ENCODE measurements at regions of chr4 and their contacts with region 1.

Region 1: DNA sequence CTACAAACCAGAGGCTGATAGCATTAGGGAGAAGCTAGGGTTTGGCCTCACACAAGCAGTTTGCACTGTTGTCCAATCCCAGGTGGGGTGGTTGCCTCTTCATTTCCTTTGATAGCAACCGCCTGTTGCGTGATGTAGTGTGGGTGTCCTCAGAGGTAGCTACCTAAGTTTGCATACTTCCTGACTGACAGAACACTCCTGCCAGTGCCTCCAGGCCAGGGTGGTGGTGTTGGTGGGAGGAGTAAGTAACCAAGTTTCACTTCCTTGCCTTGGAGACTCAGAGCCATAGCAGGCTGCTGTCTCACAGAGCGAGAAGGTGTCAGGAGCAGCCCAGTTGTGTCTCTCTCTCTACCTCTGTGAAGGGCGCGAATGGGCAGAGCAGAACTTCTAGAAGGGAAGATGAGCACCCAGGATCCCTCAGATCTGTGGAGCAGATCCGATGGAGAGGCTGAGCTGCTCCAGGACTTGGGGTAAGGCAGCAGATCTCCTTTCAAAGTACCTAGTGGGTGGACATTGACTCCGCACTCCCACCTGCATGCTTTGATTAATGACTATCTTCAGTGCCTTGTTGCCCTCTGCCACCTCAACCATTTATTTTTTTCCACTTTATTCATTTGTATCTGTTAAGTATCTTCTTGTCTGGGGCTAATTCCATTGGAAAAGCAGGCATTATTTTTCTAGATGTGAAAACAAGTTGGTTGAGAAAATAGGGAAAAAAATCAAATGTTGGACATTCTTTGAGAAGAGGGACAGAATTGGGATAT is at the start of gene DAPP1:
- DNase-seq: peak; percentile 89
- ATAC-seq: peak; percentile 58
- H3K4me3 ChIP-seq: peak within 1 kb of the TSS; percentile 69
- H3K27ac ChIP-seq: peak within 1 kb of the TSS; percentile 99
- H3K4me1 ChIP-seq: peaks cover 40% of the 10 kb centered on the region
- H3K27me3 ChIP-seq: no peaks in the 10 kb centered on the region
- CTCF ChIP-seq: no peak
- total RNA-seq, gene DAPP1: 11.6 and 11.8 TPM in 2 replicates

Region 2: DNA sequence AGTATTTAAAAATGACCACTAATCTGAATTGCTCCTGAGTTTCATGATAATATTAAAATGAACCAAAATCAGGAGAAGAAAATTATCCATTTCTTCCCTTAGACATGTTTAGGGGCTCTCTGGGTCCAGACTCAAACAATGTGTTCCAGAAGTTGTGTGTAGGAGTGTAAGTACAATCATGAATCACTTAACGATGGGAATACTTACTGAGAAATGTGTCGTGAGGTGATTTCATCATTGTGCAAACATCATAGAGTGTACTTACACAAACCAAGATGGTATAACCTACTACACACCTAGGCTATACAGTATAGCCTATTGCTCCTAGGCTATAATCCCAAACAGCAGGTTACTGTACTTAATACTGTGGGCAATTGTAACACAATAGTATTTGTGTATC is 1748.2 kb before region 1 on chr4:
- CTCF ChIA-PET with region 1: no interaction called
- POLR2A ChIA-PET with region 1: no interaction called
- intact Hi-C with region 1: no loop called
- DNase-seq: peak; percentile 54
- ATAC-seq: peak; percentile 64; the same call in 1 of the 2 replicates
- H3K4me3 ChIP-seq: no peak overlapping the region
- H3K27ac ChIP-seq: no peak overlapping the region
- H3K4me1 ChIP-seq: peaks cover 3% of the 10 kb centered on the region; the same call in 1 of the 2 replicates
- H3K27me3 ChIP-seq: no peaks in the 10 kb centered on the region
- CTCF ChIP-seq: no peak

Region 3: DNA sequence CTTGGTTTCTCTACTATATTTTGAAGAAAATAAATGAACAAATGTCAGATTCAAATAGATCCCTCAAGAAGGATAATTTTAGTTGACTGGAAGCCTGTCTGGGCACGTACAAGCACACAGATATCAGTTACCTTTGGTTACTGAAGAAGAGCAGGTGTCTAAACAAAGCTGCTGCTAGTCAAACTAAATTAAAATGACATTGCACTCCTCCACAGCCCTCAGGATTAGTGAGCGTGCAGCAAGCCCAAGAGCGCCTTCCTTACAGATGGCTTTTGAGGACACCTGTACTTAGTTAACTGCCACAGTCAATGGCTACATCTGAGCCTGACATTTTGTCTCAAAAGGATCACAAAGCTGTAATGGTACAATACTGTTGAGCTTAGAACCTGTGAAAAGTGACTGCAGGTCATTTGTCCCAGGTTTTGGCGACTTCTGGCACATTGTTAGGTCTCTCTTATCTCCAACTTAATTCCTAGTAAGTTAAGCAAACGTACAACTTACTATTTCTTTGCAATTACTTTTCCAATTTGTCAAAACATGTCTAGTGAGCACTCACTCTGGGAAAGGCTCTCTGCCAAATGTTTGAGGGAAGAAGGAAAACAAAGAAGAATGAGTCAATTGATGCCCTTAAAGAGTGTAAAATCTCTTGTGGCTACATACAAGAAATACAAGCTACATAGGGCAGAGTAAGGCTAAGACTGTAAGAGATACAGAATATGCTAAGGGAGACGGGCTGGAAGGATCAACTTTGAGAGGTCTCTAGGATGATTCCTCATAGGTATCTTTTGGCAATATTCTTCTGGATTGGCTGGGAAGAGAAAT is 25.7 kb before region 1 on chr4:
- CTCF ChIA-PET with region 1: no interaction called
- POLR2A ChIA-PET with region 1: no interaction called
- intact Hi-C with region 1: no loop called
- DNase-seq: peak; percentile 49
- ATAC-seq: 0 out of 2 replicates have a peak, but pooled peaks have one; percentile 29
- H3K4me3 ChIP-seq: no peak overlapping the region
- H3K27ac ChIP-seq: no peak overlapping the region
- H3K4me1 ChIP-seq: no peaks in the 10 kb centered on the region
- H3K27me3 ChIP-seq: no peaks in the 10 kb centered on the region
- CTCF ChIP-seq: no peak

Region 4: DNA sequence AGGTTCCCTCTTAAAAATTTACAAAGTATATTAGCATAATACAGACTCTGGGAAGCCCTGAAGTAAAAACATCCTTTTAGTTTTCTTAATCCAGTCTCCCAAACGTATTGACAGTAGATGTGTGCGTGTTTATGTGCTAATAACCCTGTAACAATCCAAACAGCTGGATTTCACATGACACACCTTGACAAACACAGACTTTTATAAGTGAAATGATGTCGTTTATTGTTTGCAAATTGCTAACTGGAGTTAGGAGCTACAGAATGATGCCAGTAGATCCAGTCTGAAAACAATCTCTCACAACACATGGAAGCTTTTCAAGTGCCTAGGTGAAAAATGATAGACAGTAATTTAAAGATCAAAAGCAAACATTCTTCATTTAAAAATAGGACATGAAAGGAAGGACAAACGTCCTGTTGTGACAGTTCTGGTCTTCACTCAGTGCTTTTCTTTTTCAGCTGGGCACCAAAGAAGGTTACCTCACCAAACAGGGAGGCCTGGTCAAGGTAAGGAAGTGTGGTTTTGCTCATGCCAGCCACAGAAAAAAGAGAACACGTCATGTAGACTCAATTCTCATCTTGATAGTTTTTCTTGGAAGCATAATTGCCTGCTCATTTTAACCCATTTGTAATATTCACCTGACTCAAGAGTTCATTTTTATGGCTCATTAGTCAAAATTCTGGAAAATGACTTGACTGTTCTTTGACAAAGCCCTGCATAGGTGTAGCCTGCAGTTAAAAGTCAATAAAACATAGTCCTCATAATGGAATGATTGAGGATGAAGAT is 44.6 kb after region 1 on chr4:
- CTCF ChIA-PET with region 1: no interaction called
- POLR2A ChIA-PET with region 1: no interaction called
- intact Hi-C with region 1: loop called (anchors 5 kb)
- DNase-seq: no peak
- ATAC-seq: no peak
- H3K4me3 ChIP-seq: no peak overlapping the region
- H3K27ac ChIP-seq: no peak overlapping the region
- H3K4me1 ChIP-seq: peaks cover 11% of the 10 kb centered on the region; the same call in 1 of the 2 replicates
- H3K27me3 ChIP-seq: no peaks in the 10 kb centered on the region
- CTCF ChIP-seq: no peak

Region 5: DNA sequence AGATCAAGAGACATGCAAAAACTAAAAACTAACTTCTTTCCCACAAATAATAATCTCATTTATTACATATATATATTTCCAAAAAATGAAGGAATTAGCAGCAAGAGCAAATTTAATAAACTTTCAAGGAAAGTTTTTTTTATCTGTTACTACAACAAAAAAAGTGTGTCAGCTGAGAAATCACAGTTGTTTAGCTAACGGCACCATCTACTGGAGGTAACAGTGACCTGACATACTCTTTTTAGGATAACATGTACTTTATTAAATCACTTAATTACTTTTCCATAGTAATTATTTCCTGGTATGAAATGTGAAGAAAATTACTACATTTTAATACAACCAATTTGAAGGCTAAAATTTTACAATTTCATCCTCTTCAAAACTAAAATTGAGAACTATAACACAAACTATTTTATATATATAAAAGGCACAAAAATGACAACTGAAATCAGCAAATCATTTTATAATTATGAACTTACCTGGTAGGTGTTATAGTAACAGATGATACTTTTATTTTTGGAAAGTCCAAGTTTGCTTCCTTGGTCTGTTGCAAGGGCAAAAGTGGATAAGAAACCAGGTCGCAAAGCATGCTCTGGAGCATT is 68.4 kb after region 1 on chr4:
- CTCF ChIA-PET with region 1: no interaction called
- POLR2A ChIA-PET with region 1: interaction called, 6 read pairs
- intact Hi-C with region 1: loop called (anchors 5 kb)
- DNase-seq: peak; percentile 54
- ATAC-seq: no peak
- H3K4me3 ChIP-seq: no peak overlapping the region
- H3K27ac ChIP-seq: peak overlapping the region; percentile 58; the same call in 1 of the 2 replicates
- H3K4me1 ChIP-seq: peaks cover 13% of the 10 kb centered on the region
- H3K27me3 ChIP-seq: no peaks in the 10 kb centered on the region
- CTCF ChIP-seq: peak; percentile 69

Region 6: GRCh38 chr4:99949034-99949998 is 132.6 kb after region 1 on chr4:
- CTCF ChIA-PET with region 1: no interaction called
- POLR2A ChIA-PET with region 1: no interaction called
- intact Hi-C with region 1: loop called (anchors 5 kb)
- DNase-seq: peak; percentile 92
- ATAC-seq: peak; percentile 32
- H3K4me3 ChIP-seq: peak overlapping the region; percentile 96
- H3K27ac ChIP-seq: peak overlapping the region; percentile 63
- H3K4me1 ChIP-seq: peaks cover 33% of the 10 kb centered on the region
- H3K27me3 ChIP-seq: no peaks in the 10 kb centered on the region
- CTCF ChIP-seq: peak; percentile 70

Region 7: DNA sequence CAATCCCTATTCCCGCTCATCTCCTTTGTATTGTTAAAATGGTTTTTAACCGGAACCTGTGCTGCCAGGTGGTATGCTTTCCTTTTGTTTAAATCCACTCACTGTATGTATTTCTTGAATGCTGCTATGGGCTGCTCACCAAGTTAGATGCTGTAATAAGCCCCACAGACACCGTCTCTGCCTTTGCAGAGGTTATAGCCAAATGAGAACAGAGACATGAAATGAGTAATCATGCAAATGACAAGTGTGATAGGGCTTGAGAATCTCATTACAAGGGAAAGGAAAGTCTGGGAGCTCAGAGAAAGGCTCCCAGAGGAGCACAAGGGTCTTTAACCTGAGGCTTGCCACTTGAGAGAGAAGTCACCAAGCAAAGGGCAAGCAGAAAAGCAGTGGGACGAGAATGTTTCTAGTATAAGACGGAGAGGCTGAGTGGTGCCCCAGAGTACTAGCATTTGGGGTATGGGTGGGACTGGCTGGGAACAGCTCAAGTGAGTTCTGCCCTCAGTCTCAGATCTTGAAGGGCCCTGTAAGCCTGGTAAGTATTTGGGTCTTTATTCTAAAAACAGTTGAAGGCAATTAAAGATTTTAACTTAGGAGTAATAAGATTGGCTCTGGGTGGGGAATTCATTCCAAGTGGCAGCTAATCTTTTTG is 244.2 kb after region 1 on chr4:
- CTCF ChIA-PET with region 1: interaction called, 5 read pairs
- POLR2A ChIA-PET with region 1: no interaction called
- intact Hi-C with region 1: loop called (anchors 10 kb)
- DNase-seq: no peak
- ATAC-seq: no peak
- H3K4me3 ChIP-seq: no peak overlapping the region
- H3K27ac ChIP-seq: no peak overlapping the region
- H3K4me1 ChIP-seq: peaks cover 25% of the 10 kb centered on the region
- H3K27me3 ChIP-seq: no peaks in the 10 kb centered on the region
- CTCF ChIP-seq: no peak

Region 8: DNA sequence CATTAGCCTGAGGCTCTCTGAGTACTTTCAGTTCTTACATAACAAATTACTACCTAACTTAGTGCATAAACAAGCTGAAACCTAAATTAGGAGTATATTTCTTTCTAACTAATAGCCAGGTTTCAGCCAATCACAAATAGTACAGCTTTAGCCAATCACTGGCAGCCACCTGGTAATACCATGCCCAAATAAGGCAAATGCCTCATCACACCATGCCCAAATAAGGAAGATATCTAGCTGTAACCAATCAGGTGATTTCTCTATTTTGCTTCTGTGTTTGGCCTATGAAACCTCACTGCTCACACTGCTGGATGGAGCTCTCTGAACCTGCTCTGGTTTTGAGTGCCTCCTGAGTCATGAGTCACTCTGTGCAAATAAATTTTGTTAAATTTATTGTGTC is 260.0 kb after region 1 on chr4:
- CTCF ChIA-PET with region 1: no interaction called
- POLR2A ChIA-PET with region 1: no interaction called
- intact Hi-C with region 1: no loop called
- DNase-seq: peak; percentile 74
- ATAC-seq: peak; percentile 99
- H3K4me3 ChIP-seq: no peak overlapping the region
- H3K27ac ChIP-seq: peak overlapping the region; percentile 64
- H3K4me1 ChIP-seq: peaks cover 9% of the 10 kb centered on the region
- H3K27me3 ChIP-seq: no peaks in the 10 kb centered on the region
- CTCF ChIP-seq: no peak

Region 9: GRCh38 chr4:100162027-100162685 is 345.4 kb after region 1 on chr4:
- CTCF ChIA-PET with region 1: no interaction called
- POLR2A ChIA-PET with region 1: no interaction called
- intact Hi-C with region 1: no loop called
- DNase-seq: no peak
- ATAC-seq: no peak
- H3K4me3 ChIP-seq: no peak overlapping the region
- H3K27ac ChIP-seq: no peak overlapping the region
- H3K4me1 ChIP-seq: no peaks in the 10 kb centered on the region
- H3K27me3 ChIP-seq: no peaks in the 10 kb centered on the region
- CTCF ChIP-seq: no peak